Left lung (tissue), 14 donors: ENCODE measurements at regions of chr5 and their contacts with region 1.

Region 1: DNA sequence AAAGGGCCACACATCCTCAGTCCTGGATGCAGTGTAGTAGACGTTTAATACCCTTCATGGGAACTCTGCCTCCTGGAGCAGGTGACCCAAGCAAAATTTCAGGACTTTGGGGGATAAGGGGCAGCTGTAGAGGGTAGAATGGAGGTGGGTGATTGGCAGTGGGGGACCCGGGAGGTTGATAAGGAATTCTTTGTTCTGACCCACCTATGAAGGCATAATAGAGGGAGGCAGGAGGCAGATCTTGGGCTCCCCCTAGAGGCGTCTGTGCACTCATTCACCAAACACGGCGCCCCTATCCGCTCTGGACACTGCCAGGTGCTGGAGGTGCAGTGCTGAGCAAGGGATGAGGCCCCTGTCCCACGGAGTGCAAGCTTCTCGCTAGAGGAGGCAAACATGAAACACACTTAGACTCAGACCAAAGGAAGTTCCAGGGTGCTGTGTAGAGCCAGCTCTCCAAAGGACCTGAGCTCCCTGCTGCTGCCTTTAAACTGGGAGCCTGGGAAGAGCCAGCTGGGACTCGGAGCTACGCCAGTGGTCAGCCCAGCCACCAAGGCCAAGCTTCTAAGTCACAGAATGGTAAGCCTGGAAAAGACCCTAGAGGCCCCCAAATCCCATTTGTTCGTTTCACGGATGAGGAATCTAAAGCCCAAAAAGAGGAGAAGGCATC is 7.7 kb downstream of the IL17B start:
- DNase-seq: peak in 1 of 4 donors; percentile 57
- ATAC-seq: peak; percentile 94
- H3K4me3 ChIP-seq: no peak overlapping the region
- H3K27ac ChIP-seq: no peak overlapping the region
- H3K4me1 ChIP-seq: peaks cover 0 to 8% of the 10 kb centered on the region in 2 donors
- H3K27me3 ChIP-seq: no peaks in the 10 kb centered on the region
- CTCF ChIP-seq: peak; percentile 79 to 89

Region 2: DNA sequence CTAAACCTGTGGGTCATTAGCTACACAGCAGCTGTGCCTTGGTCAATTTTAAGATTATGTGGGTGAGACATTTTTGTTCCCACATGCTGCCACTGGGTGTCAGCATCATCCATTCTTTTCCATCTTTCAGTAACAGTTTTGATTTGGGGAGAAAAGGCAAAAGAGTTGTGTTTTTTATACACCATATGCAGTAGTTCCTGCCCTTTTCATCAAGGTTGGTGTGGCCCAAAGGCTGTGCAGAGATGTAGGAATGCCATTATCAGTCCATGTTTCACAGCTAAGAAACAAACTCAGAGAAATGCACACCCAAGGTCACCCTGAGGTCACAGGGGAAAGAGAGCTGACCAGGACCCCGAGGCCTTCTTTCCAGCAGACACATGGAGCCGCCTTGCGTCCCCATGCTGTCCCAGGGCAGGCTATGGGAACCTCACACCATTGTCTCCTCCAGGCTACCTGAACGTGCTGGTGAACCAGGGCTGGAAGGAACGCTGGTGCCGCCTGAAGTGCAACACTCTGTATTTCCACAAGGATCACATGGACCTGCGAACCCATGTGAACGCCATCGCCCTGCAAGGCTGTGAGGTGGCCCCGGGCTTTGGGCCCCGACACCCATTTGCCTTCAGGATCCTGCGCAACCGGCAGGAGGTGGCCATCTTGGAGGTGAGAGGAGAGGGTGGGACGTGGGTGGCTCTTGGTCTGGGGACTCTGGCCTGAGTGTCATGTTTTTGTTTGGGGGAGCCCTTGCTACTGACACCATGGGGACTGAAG is 54.0 kb before region 1 on chr5:
- intact Hi-C with region 1: loop called in 1 of 2 experiments (anchors 5 kb)
- DNase-seq: peak in 2 of 4 donors; percentile 46 to 69
- ATAC-seq: peak; percentile 64
- H3K4me3 ChIP-seq: no peak overlapping the region
- H3K27ac ChIP-seq: no peak overlapping the region
- H3K4me1 ChIP-seq: peaks cover 6 to 13% of the 10 kb centered on the region in 2 donors
- H3K27me3 ChIP-seq: no peaks in the 10 kb centered on the region
- CTCF ChIP-seq: peak; percentile 46 to 73

Region 3: DNA sequence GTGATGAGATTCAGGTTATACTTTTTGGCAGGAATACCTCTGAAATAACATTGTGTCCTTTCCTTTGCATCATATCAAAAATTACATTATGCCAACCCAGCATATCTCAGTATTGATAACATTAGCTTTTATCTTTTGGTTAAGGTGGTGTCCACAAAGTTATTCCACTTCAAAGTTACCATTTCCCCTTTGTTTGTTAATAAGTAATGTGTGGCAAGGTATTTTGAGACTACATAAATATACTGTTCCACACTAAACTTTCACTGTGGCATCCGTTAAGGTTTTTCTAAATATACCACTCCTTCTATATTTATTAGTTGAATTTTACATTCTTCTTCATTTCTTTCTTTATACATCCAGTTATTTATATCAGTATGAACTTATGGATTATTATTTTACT is 195.8 kb after region 1 on chr5:
- intact Hi-C with region 1: loop called in 1 of 2 experiments (anchors 5 kb)
- DNase-seq: no peak
- ATAC-seq: no peak
- H3K4me3 ChIP-seq: no peak overlapping the region
- H3K27ac ChIP-seq: no peak overlapping the region
- H3K4me1 ChIP-seq: peaks cover 12 to 23% of the 10 kb centered on the region in 2 donors
- H3K27me3 ChIP-seq: no peaks in the 10 kb centered on the region
- CTCF ChIP-seq: no peak